GM18951 (cell line): ENCODE measurements at regions of chr14 and their contacts with region 1.

Region 1: DNA sequence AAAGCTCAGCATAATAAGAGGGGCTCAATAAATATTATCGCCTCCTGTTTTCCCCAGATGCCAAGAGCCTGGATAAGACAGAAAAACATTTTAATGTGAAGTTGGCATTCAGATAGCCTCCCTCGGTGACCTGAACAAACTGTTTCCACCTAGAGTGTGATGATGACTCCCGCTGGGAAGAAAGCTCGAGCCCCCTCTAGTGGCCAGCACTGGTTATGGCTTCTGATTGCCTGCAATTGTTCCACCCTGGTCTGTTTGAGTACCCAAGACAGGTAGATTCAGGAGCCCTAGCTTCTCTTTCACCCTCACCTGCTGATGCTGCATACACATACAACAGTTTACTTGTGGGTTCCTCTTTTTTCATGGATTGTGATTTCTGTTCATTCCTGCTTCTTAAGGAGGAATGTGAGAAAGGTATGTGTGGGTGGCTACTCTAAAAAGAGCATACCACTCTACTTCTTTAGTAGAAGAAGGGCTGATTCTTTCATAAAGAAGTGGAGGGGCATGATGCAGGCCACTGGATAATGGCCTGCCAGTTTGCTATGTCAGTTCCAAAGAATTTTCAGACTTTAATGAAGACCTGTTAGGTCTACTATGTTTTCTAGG is 6.4 kb downstream of the ERG28 start:
- POLR2A ChIP-seq: no peak

Region 2: GRCh38 chr14:75042035-75042434 is 612.2 kb before region 1 on chr14:
- in situ Hi-C with region 1: no loop called
- POLR2A ChIP-seq: no peak

Region 3: DNA sequence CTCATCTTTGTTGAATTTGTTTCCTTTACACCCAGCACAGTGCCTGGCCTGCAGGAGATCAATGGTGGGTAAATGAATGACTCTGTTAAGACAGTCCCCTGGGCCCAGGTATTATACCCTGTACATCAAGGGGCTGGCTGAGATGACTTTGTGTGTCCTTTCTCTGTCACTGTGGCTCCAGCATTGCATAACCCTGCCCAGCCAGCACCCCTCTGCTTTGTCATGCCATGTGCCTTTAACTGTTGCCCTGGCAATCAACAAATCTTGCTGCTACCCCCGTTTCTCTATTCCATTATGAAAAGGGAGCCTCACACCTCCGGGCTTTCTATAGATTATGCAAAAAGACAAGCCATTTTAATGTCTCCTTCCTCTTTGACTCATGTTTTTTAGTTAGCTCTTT is 83.4 kb before region 1 on chr14:
- in situ Hi-C with region 1: loop called (anchors 5 kb)
- POLR2A ChIP-seq: no peak

Region 4: DNA sequence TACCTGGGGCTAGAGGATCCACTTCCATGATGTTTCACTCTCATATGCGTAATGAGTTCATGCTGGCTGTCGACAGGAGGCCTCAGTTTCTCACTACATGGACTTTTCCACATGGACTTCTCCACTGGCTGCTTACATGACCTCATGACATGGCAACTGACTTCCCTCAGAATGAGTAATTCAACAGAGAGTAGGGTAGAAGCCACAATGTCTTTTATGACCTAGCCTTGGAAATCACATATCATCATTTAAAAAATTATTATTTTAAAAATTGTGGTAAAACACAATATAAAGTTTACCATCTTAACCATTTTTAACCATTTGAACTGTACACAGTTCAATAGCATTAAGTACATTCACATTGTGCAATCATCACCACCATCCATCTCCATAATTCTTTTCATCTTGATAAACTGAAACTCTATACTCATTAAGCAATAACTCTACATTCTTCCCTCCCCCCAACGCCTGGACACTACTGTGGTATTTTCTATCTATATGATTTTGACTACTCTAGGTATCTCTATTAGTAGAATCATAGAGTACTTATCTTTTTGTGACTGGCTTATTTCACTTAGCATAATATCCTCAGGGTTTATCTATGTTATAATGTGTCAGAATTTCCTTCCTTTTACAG is 183.0 kb after region 1 on chr14:
- in situ Hi-C with region 1: no loop called
- POLR2A ChIP-seq: no peak

Region 5: DNA sequence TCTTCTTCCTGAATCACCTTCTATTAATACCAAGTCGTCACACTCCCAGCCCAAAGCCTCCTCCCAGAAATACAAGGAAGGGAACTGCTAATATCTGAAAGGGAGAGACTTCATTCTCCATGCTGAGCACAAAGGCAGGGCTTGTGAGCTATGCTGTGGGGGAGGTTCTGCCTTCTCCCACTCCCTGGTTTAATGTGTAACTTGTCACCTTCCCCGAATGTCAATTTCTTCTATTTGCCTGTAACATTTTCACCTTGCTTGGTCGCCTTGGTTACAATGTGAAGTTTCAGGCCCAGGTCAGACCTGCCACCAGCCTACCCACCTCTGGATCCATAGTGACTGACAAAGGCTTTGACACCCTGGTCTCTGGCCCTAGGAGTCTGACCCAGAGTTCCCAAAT is 639.7 kb after region 1 on chr14:
- in situ Hi-C with region 1: no loop called
- POLR2A ChIP-seq: no peak